ENCODE measurements at regions of chr20 and their contacts with region 1.

Region 1: DNA sequence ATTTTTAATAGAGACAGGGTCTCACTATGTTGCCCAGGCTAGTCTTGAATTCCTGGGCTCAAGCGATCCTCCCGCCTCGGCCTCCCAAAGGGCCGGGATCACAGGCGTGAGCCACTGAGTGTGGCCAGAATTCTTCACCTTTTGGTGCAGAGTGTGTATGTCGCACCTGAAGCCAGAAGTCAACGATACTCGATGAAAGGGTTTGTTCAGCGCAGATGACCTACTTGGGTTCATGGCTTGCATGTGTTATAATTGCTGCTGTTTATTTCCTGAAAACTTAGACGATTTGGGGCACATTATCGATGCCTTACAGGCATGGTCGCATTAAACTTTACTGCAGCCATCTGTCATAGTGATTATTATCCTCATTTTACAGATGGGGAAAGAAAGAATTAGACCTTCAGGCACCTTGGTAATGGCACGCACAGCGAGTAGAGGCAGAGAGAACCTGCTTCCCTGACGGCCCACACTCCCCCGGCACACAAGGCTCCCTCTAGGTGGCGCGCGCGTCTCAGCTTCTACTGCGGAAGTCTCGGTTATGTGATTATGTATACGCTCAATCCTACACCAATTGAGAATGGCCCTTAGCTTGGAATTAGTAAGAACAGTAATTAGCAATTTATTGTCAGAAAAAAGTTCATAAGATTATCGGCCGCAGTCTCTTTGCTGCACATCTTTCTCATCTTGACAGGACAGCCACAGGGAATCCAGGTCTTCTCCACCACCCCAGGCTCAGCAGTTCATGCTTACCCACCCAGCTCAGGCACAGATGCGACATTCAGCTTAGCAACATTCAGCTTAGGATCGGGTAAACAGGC is 212.8 kb upstream of the PROKR2 start:
- DNase-seq: peak; percentile 69 to 98 (median 90)

Region 2: DNA sequence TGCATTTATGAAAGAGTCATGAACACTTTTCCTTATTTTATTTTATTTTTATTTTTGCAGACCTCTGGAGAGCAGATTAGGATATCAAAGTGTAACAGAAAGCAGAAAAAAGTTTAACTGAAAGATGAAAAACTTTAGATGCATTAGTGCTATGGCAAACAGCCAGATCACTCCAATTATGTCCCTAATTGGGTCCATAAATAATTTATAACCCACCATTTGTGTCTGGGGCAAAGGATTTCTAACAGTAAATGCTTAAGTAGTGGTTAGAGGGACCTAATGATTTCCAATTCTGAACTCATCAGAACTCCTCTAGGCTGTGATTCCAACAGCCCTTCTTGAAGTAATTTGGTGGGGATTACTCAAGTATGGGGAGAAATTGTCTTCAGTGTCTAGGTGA is 119.1 kb before region 1 on chr20:
- intact Hi-C with region 1: no loop called
- DNase-seq: no peak

Region 3: GRCh38 chr20:5788385-5788895 is 258.9 kb after region 1 on chr20:
- intact Hi-C with region 1: loop called (anchors 1 kb)
- DNase-seq: peak in 9 of 10 donors; percentile 23 to 94 (median 72)

Region 4: GRCh38 chr20:5809495-5809894 is 280.0 kb after region 1 on chr20:
- intact Hi-C with region 1: no loop called
- DNase-seq: no peak

Region 5: DNA sequence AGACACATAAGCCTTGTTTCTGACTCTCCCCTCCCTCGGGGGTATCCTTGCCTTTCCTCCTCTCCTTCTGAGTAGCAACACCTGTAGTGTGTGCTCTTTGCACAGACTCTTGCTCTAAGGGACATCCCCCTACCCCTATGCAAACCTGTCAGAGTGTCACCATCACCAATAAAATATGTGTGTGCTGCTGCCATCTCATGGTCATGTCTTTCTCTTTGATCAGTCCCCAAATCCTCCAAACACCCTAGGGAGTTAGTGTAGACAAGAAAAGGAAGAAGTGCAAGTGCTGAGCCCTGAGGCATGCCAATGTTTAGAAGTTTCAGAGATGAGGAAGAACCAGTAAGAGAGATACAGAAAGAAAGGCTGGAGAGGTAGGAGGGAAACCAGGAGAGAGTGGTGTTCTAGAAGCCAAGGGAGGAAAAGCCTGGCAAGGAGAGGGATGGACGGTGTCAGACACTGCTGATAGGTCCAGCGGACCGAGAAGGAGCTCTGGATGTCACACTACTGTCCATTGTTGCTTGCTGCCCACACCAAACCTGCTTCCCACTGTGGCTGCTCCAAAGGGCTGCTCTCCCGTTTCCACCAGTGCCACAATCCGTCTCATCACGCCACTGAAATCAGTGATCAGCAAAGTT is 404.4 kb after region 1 on chr20:
- intact Hi-C with region 1: loop called (anchors 10 kb)
- DNase-seq: no peak

Region 6: DNA sequence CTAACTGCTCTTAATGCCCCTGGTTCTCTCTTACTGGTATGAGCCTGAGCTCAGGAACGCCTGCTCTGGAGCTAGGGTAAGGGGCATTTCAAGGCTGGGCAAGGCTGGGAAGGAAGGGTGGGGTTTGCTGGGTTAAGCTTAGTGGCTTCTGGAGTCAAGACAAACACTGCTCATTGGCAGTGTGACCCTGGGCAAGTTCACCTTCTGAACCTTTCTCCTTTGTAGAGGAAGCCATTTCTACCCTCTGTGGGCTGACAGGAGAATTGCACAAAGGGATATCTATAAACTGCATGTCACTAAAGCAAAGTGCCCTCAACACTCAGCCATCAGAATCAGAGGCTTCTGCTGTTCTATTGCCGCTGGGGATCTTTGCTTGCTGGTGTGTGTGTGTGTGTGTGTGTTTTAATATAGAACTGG is 544.6 kb after region 1 on chr20:
- intact Hi-C with region 1: loop called (anchors 1 kb)
- DNase-seq: no peak

Measured in posterior cingulate gyrus (tissue), 11 donors.